Panc1 (cell line): ENCODE measurements at regions of chr6 and their contacts with region 1.

Region 1: GRCh38 chr6:27592481-27593199 is 119.7 kb upstream of the ZNF184 start:
- DNase-seq: peak; percentile 98
- ATAC-seq: peak; percentile 97
- H3K4me3 ChIP-seq: peak overlapping the region; percentile 73 to 74
- H3K27ac ChIP-seq: peak overlapping the region; percentile 66
- H3K4me1 ChIP-seq: no peaks in the 10 kb centered on the region
- H3K27me3 ChIP-seq: peaks cover 2% of the 10 kb centered on the region; the same call in 1 of the 2 replicates
- CTCF ChIP-seq: no peak

Region 2: DNA sequence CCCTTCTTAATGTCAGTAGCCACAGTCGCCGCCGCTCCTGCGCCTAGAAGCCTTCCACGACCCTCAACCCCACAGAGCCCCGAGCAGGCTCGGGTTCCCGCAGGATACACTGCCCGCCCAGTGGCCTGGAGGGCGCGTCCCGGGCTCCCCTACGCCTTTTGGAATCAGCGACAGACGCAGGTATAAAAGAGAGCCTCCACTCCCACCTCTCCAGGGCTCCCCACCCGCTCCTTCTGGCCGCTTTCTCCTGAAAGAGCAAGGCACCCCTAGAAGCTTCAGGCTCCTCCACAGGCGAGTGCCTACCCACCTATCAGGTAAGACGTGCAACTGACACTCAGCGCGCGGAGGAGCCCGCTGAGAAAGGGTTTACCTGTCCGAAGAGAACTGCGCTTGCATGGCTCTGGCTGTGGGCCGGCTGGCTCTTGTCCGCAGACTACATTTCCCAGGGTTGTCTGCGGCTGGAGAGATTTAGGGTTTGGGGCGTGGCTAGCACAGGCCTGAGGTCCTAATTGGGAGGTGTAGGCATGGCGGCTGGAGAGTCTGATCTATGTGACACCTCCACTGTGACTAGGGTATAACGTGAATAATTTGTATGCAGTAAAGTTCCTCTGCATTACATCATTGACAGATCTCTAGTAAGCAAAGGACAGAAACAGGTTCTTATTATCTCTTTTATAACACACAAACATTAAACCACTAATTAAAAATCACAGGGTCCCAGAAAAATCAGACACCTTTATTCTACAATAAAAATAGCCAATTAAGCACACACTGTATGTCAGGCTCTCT is 217.6 kb before region 1 on chr6:
- CTCF ChIA-PET with region 1: no interaction called
- POLR2A ChIA-PET with region 1: no interaction called
- in situ Hi-C with region 1: no loop called
- intact Hi-C with region 1: no loop called
- DNase-seq: peak; percentile 35
- ATAC-seq: peak; percentile 100
- H3K4me3 ChIP-seq: peak overlapping the region; percentile 67 to 82
- H3K27ac ChIP-seq: peak overlapping the region; percentile 52; the same call in 1 of the 2 replicates
- H3K4me1 ChIP-seq: peaks cover 6% of the 10 kb centered on the region; the same call in 1 of the 2 replicates
- H3K27me3 ChIP-seq: no peaks in the 10 kb centered on the region
- CTCF ChIP-seq: no peak

Region 3: DNA sequence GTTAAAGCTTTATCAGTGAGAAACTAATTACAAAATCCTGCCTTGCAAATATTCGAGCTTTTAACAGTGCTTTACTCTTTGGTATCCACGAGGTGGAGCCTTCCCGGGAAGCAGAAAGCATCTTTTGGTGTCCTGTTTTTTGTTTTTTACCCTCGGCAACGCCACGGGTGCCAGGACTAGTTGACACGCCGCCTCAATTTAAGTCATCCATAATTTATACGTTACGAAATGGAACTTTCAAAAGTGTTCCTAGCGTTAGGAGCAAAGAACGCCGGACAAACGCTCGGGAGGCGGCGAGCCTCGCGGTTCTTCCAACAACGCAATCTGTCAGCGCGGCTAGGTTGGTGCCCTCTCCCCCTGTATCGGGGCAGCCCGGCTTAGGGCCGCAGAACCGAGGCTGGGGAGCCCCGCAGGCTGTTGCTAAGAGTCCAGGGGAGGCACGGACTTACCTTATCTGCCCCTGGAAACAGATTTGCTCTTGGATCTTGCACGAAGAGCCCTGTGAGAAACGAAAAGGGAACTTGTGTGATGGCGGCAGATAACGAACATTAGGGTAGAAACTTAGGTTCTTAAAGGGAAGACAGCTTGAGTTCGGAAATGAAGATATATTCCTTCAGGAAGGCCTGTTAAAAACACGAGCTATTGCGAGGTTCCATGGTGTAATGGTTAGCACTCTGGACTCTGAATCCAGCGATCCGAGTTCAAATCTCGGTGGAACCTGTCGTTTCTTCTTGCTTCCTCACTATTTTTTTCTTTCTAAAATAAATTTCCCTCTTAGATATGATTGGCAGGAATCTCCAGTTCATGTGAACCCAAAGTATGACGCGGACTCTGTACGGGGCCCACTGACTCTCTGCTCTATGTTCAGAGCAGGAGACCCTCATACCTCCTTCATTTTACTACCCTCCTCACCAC is 73.5 kb before region 1 on chr6:
- CTCF ChIA-PET with region 1: no interaction called
- POLR2A ChIA-PET with region 1: no interaction called
- in situ Hi-C with region 1: no loop called
- intact Hi-C with region 1: loop called (anchors 2 kb)
- DNase-seq: peak; percentile 96
- ATAC-seq: peak; percentile 93
- H3K4me3 ChIP-seq: peak overlapping the region; percentile 93 to 95
- H3K27ac ChIP-seq: peak overlapping the region; percentile 82
- H3K4me1 ChIP-seq: peaks cover 10% of the 10 kb centered on the region
- H3K27me3 ChIP-seq: peaks cover 11% of the 10 kb centered on the region; the same call in 1 of the 2 replicates
- CTCF ChIP-seq: peak; percentile 85

Region 4: DNA sequence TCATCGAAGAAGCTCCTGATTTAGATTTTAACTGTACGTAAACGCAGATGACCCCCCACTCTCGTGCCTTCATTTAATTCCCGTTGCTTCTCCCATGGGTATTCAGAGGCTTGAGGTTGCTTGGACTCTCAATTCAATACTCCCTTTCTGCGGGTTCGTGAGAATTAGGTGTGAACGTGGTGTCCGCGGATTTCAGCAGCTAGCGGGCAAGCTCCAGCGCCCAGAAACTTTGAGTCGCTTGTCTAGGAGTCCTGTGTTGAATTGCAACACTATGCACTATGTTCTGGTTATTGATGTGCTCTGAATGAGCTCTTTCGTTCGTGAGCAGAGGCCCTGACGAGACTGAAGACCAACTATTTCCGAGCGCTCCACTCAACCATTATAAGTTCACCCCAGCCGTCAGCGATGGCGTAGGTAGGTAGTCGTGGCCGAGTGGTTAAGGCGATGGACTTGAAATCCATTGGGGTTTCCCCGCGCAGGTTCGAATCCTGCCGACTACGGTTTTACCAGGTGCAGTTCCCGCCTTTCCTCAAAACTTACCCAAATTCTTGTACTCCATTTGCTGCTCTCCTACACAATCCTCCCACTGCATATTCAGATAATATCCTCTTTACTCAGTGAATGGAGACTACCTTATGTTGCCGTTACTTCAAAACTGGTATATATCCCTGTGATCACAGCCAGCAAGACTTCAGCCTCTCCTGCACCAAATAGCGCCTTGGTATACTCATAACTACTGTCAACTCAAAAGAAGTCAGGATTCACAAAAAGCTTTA is 47.2 kb before region 1 on chr6:
- CTCF ChIA-PET with region 1: no interaction called
- POLR2A ChIA-PET with region 1: interaction called, 5 read pairs
- in situ Hi-C with region 1: no loop called
- intact Hi-C with region 1: loop called (anchors 5 kb)
- DNase-seq: peak; percentile 97
- ATAC-seq: peak; percentile 85
- H3K4me3 ChIP-seq: peak overlapping the region; percentile 81 to 92
- H3K27ac ChIP-seq: peak overlapping the region; percentile 68
- H3K4me1 ChIP-seq: peaks cover 33% of the 10 kb centered on the region
- H3K27me3 ChIP-seq: peaks cover 2% of the 10 kb centered on the region; the same call in 1 of the 2 replicates
- CTCF ChIP-seq: no peak

Region 5: DNA sequence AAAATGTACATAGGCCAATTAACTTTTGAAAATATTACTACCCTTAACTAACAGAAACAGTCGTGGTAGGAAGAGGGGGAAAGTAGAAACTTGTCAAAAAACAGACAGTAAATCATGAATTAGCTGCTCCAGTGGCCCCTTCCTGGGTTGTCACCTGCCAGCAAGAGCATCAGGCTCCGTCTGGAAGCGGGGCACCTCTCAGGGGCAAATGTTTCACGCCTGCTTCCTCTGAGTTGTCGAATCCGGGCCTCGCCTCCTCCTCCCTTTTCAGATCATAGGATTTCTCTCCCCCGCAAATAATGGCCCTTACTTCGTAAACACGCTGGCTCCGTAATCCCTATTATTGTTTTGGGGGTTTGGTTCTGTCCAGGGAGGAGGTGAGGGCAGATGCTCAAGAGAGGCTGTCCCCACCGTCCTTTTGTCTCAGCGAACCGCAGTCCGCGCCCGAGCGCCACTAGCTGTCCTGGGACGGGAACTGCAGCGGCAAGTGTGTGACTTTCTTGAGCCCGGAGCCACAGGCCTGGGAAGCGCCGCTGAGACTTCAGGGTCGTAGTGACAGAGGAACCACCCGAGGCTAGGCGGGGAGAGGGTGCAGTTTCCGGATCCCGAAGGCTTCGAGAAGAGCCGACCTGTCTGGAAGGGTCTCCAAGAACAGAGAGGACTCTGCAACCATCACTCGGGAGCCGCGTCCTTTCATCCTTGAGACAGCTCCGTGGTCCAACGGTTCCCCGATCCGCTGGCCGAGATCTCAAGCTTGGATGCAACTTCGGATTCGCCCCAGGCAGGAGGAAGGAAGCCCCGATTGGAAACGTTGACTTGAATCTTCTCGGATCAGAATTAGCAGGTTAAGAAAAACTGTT is 94.7 kb after region 1 on chr6:
- CTCF ChIA-PET with region 1: no interaction called
- POLR2A ChIA-PET with region 1: no interaction called
- in situ Hi-C with region 1: no loop called
- intact Hi-C with region 1: loop called (anchors 5 kb)
- DNase-seq: peak; percentile 85
- ATAC-seq: peak; percentile 81
- H3K4me3 ChIP-seq: peak overlapping the region; percentile 66 to 76
- H3K27ac ChIP-seq: peak overlapping the region; percentile 82
- H3K4me1 ChIP-seq: no peaks in the 10 kb centered on the region
- H3K27me3 ChIP-seq: no peaks in the 10 kb centered on the region
- CTCF ChIP-seq: peak; percentile 93